ENCODE measurements at regions of chr11 and their contacts with region 1.

Region 1: DNA sequence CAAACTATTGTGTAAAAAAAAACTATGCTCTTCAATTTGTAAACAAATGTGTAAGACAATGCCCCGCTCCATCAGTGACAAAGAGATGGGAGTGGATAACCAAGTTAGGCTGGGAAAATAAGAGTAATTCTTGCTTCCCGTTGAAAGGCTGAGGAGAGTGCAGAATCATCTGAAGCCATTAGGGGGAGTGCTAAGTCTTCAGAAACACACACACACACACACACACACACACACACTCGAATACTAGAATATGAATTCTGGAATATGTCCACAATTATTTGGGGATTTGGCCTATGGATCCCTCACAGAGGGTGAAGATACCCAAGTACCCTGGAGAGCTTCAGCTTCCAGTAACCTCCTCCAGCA is 27.8 kb upstream of the ROBO3 start:
- DNase-seq: peak; percentile 71
- H3K4me3 ChIP-seq: no peak overlapping the region
- H3K27ac ChIP-seq: no peak overlapping the region
- H3K4me1 ChIP-seq: peaks cover 14% of the 10 kb centered on the region
- H3K27me3 ChIP-seq: peaks cover 52% of the 10 kb centered on the region
- CTCF ChIP-seq: peak; percentile 77 to 80

Region 2: DNA sequence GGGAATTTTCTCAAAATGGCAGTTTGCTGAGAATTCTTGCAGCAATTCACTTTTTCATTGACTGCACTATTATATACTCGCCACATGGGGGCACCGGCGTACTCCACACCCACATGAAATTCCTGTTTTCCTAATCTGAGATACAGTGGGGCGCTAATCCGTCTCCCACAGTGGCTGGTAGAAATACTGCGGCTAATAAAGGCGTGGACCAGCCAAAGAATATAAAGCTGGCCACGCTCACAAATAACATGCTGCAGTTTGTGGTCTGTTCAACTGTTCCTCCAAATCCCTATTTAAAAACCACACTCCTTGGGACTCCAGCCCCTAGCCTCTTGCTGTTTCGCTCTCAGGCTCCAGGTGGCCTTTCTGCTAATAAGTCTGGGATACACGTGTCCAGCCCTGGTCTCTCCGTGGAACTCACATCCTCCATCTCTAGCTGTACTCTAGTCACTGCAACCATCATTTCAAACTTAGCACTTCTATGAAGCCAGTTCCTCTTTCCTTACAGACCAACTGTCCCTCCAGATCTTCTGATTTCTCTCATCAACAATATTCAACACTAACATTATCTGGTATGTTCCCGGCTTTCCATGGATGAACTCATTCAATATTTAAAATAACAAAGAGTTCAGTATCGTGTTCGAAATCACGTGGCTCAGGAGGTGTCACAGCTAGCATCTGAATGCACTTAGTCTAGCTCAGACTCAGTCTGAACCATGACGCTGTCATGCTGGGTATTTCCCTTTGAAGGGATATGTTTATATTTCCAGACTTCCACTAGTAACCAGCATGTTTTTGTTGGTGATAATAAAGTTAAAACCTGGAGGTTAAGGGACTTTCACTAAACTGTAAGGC is 192.8 kb before region 1 on chr11:
- CTCF ChIA-PET with region 1: no interaction called
- dilution Hi-C with region 1: no loop called
- in situ Hi-C with region 1: no loop called
- intact Hi-C with region 1: loop called (anchors 1 kb)
- DNase-seq: peak; percentile 50
- H3K4me3 ChIP-seq: peak overlapping the region in 1 of 3 experiments; percentile 13
- H3K27ac ChIP-seq: no peak overlapping the region
- H3K4me1 ChIP-seq: peaks cover 16% of the 10 kb centered on the region
- H3K27me3 ChIP-seq: no peaks in the 10 kb centered on the region
- CTCF ChIP-seq: peak; percentile 80 to 86

Region 3: DNA sequence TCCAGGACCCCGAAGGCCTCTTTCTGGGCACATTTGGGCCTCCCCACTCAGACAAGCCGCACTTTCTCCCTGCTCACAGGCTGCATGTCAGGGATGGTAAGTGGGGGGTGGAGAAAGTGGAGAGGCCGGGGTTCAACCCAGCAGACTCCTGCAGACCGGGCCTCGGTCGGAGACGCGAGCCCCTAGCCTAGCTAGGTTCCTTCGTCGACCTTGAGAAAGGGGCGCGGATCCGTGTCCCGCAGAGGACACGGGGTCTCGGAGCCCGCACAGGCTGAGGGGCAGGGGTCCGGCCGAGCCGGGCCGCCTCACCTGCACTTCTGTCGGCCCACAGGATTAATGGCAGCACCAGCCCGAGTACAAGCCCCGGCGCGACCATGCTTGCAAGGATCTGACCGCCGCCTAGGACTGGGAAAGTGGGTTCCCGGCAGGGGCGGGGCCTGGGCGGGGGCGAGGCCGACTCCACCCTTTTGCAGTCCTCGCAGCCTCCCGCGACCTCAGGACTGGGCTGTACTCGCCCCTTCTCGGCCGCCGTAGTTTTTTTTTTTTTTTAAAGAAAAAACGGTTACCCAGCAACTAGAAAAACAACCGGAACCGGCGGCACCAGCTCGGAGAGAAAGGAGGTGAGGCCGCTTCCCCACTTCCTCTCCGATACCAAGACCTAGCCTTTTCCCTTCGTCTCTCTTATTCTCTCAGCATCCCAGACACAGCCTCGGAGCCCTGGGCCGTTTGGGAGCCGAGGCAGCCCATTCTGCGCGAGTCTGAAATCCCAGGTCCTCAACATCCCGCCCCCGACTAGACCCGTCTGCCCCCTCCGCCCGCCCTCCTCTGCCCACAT is 163.9 kb before region 1 on chr11 and contains the starts of genes SIAE and SPA17:
- CTCF ChIA-PET with region 1: interaction called, 9 read pairs
- dilution Hi-C with region 1: no loop called
- in situ Hi-C with region 1: loop called in 1 of 2 experiments (anchors 10 kb)
- intact Hi-C with region 1: loop called (anchors 1 kb)
- DNase-seq: peak; percentile 95
- H3K4me3 ChIP-seq: peak within 1 kb of the TSS; percentile 67 to 71 (median 70)
- H3K27ac ChIP-seq: peak within 1 kb of the TSS; percentile 78
- H3K4me1 ChIP-seq: peaks cover 14% of the 10 kb centered on the region
- H3K27me3 ChIP-seq: no peaks in the 10 kb centered on the region
- CTCF ChIP-seq: no peak
- total RNA-seq, gene SIAE: 13.7 to 13.8 TPM
- total RNA-seq, gene SPA17: 6.2 to 8.9 TPM

Region 4: GRCh38 chr11:124758317-124759203 is 78.9 kb before region 1 on chr11:
- CTCF ChIA-PET with region 1: interaction called, 3 read pairs
- dilution Hi-C with region 1: no loop called
- in situ Hi-C with region 1: no loop called
- intact Hi-C with region 1: loop called (anchors 1 kb)
- DNase-seq: peak; percentile 45
- H3K4me3 ChIP-seq: peak overlapping the region in 2 of 3 experiments; percentile 10 to 22
- H3K27ac ChIP-seq: no peak overlapping the region
- H3K4me1 ChIP-seq: peaks cover 20% of the 10 kb centered on the region
- H3K27me3 ChIP-seq: peaks cover 25% of the 10 kb centered on the region
- CTCF ChIP-seq: peak; percentile 49 to 73

Region 5: DNA sequence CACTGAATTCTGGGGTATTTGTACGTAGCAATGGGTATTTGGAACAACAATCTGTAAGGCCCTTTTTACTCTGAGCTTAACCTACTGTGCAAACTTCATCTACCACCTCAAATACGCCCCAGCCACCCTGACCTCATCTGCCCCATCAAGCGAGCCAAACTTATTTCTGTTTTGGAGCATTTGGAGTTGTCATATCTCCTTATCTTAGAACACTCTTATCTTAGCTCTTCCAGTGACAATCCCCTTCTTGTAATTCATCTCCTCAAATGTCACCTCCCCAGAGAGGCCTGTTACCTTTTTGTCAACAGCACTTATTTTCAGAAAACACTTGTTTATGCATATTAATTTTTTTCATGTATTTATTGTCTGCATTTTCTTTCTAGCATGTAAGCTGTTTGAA is 32.6 kb before region 1 on chr11:
- CTCF ChIA-PET with region 1: no interaction called
- dilution Hi-C with region 1: no loop called
- in situ Hi-C with region 1: no loop called
- intact Hi-C with region 1: no loop called
- DNase-seq: no peak
- H3K4me3 ChIP-seq: no peak overlapping the region
- H3K27ac ChIP-seq: no peak overlapping the region
- H3K4me1 ChIP-seq: peaks cover 9% of the 10 kb centered on the region
- H3K27me3 ChIP-seq: no peaks in the 10 kb centered on the region
- CTCF ChIP-seq: no peak

Region 6: DNA sequence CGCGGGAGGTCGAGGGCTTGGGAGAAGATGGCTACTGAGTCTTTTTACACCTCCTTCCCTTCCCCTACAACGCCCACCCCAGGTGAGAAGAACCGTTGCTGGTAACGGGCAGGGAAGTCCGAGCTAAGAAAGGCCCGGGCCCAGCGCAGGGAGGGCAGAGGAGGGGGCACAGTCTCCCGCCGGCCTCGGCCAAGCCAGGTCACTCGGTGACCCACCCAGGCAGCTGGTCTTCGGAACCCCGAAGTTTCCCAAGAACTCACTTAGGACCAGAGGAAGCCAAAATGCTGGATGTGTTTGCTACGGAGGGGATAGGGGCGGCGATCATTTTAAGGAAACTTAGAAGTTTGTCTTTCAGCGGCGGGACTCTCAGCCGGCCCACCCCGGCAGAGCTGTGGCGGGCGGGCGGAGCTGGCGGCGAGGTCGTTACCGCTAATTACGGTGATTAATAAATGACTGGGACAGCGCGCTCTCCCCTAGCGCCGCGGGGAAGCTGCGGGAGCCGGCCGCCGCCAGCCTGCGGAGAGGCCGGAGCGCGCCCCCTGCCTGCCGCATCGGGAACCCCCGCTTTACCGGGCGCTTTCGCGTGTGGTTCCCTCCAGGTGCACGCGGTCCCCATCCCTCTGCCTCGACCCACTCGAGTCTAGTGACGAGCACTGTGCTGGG is 28.6 kb after region 1 on chr11:
- CTCF ChIA-PET with region 1: interaction called, 5 read pairs
- dilution Hi-C with region 1: no loop called
- in situ Hi-C with region 1: no loop called
- intact Hi-C with region 1: loop called (anchors 1 kb)
- DNase-seq: no peak
- H3K4me3 ChIP-seq: peak overlapping the region in 1 of 3 experiments; percentile 11
- H3K27ac ChIP-seq: no peak overlapping the region
- H3K4me1 ChIP-seq: peaks cover 25% of the 10 kb centered on the region
- H3K27me3 ChIP-seq: peaks cover 68% of the 10 kb centered on the region
- CTCF ChIP-seq: peak; percentile 39 to 75

Region 7: GRCh38 chr11:124953753-124954589 is 116.5 kb after region 1 on chr11 and contains the start of gene CCDC15:
- CTCF ChIA-PET with region 1: no interaction called
- dilution Hi-C with region 1: no loop called
- in situ Hi-C with region 1: no loop called
- intact Hi-C with region 1: loop called (anchors 5 kb)
- DNase-seq: peak; percentile 97
- H3K4me3 ChIP-seq: peak within 1 kb of the TSS; percentile 63 to 65 (median 64)
- H3K27ac ChIP-seq: peak within 1 kb of the TSS; percentile 77
- H3K4me1 ChIP-seq: peaks cover 9% of the 10 kb centered on the region
- H3K27me3 ChIP-seq: no peaks in the 10 kb centered on the region
- CTCF ChIP-seq: no peak
- total RNA-seq, gene CCDC15: 2.3 to 5.4 TPM

Region 8: DNA sequence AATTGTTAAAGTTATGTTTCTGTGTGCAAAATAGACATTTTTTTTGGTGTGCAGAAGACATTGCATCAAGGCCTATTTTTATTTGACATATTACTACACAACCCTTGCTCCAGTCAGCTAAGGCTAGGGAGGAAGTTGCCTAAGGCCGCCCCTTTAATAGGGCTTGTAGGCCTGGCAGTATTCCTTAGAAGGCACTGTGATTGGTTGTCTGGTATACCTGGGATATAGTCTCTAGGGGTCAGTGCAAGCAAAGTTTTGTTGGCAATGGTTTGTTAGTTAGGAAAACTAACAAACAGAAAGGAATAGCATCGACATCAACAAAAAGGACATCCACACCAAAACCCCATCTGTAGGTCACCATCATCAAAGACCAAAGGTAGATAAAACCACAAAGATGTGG is 133.5 kb after region 1 on chr11:
- CTCF ChIA-PET with region 1: no interaction called
- dilution Hi-C with region 1: no loop called
- in situ Hi-C with region 1: no loop called
- intact Hi-C with region 1: no loop called
- DNase-seq: peak; percentile 46
- H3K4me3 ChIP-seq: no peak overlapping the region
- H3K27ac ChIP-seq: no peak overlapping the region
- H3K4me1 ChIP-seq: no peaks in the 10 kb centered on the region
- H3K27me3 ChIP-seq: no peaks in the 10 kb centered on the region
- CTCF ChIP-seq: peak; percentile 10 to 49

Region 9: DNA sequence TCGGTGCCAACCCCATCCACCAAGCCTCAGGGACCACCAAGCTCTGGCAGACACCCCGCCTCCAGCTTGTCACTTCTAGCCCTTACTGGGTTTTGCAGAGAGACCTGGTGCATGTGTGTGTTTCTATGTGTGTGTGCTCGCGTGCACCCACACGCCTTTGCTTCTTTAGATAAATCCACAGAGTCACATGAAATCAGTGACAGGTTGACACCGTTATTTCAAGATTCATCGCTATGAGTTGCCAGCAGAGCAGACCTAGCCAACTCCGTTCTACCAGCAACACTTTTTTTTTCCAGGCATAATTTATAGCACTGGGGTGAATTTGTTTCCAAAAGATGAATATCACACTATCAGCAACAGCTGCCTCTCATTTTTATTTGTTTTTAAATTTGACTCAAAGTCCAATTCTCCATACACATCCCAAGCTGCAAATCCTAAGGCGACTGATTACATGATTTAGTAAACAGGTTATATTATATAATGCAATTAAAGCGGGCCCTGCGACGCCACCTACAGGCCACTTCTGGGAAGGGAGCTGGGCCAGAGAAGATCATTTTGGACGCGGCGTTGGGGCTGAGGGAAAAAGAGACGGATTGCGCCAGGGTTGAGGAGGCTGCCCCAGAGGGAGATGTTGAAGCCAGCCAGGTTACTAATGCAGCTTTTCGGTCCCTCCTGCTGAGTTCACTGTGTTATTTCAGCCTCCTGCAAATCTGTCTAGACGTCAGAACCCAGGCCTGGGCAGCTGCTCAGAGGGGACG is 508.1 kb after region 1 on chr11:
- CTCF ChIA-PET with region 1: no interaction called
- dilution Hi-C with region 1: no loop called
- in situ Hi-C with region 1: no loop called
- intact Hi-C with region 1: loop called (anchors 2 kb)
- DNase-seq: peak; percentile 32
- H3K4me3 ChIP-seq: no peak overlapping the region
- H3K27ac ChIP-seq: no peak overlapping the region
- H3K4me1 ChIP-seq: no peaks in the 10 kb centered on the region
- H3K27me3 ChIP-seq: no peaks in the 10 kb centered on the region
- CTCF ChIP-seq: peak; percentile 85 to 89